ENCODE measurements at regions of chr1 and their contacts with region 1.

Region 1: DNA sequence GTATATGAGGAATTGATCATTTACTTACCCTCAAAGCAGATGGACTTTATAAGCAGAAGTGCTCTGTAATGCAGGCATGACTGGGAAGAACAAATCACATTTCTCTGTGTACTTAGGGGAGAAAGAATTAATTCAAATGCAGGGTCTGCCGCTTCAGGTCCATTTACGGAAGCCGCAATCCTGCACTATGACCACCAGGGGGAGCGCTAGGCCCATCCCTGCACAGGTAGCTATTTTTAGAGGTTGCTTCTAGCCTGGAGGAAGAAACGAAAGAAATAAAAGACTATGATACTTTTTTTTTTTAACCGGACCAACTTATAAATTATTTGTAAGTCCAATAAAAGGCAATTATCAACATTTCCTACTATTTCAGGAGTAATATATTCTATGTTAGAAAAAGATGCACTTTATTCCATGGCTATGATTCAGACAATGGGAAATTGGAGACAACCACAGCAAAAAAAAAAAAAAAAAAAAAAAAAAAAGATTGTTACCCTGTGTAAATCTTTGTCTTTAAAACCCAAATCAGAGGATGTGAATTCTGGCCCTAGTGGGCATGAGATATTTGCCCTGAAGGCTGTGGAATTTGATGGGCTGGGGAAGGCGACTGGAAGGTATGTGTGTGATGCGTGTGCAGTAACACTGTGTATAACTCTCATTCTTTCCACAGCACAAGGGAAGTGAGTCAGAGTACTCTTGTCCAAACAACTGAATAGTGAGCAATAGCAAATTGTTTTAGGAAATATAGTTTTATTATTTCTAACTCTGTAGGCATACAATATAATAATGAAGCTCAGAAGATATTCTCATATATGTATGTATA is 12.9 kb upstream of the FYB2 start:
- DNase-seq: peak; percentile 81
- H3K4me3 ChIP-seq: peak overlapping the region in 1 of 3 experiments; percentile 12
- H3K27ac ChIP-seq: peak overlapping the region; percentile 38
- H3K4me1 ChIP-seq: peaks cover 9% of the 10 kb centered on the region
- H3K27me3 ChIP-seq: no peaks in the 10 kb centered on the region
- CTCF ChIP-seq: peak; percentile 89 to 96

Region 2: DNA sequence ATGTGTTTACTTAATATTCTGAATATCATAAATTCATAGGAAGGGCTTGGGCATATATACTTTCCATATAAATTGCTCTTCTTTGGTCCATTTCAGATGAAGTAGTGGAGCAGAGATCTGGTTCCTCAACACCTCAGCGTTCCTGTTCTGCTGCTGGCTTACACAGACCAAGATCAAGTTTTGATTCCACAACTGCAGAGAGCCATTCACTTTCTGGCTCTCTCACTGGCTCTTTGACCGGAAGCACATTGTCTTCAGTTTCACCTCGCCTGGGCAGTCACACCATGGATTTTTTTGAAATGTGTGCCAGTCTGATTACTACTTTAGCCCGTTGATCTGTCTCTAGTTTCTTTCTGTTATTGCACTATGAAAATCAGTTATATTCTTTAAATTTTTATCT is 124.7 kb before region 1 on chr1:
- CTCF ChIA-PET with region 1: no interaction called
- dilution Hi-C with region 1: no loop called
- in situ Hi-C with region 1: no loop called
- intact Hi-C with region 1: no loop called
- DNase-seq: no peak
- H3K4me3 ChIP-seq: no peak overlapping the region
- H3K27ac ChIP-seq: no peak overlapping the region
- H3K4me1 ChIP-seq: peaks cover 3% of the 10 kb centered on the region
- H3K27me3 ChIP-seq: no peaks in the 10 kb centered on the region
- CTCF ChIP-seq: no peak

Region 3: DNA sequence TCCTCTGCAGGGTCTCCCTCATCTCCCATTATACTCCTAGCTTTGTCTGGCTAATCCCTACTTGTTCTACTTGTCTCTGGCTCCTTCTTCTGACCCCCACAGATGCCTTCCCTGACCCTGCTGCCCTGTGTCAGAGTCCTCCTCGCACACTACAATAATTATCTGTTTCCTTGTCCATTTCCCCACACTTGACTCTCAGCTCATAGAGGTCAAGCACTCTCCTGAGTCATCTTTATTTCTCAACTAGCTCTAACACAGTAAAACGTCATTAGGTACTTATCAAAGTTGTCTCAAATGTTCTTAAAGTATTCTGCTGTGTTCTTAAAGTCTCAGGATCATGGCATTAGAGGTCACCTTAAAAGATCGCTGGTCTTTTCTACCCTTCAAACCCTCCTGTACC is 69.6 kb after region 1 on chr1:
- CTCF ChIA-PET with region 1: no interaction called
- dilution Hi-C with region 1: no loop called
- in situ Hi-C with region 1: no loop called
- intact Hi-C with region 1: no loop called
- DNase-seq: no peak
- H3K4me3 ChIP-seq: no peak overlapping the region
- H3K27ac ChIP-seq: no peak overlapping the region
- H3K4me1 ChIP-seq: no peaks in the 10 kb centered on the region
- H3K27me3 ChIP-seq: peaks cover 4% of the 10 kb centered on the region
- CTCF ChIP-seq: no peak

Region 4: DNA sequence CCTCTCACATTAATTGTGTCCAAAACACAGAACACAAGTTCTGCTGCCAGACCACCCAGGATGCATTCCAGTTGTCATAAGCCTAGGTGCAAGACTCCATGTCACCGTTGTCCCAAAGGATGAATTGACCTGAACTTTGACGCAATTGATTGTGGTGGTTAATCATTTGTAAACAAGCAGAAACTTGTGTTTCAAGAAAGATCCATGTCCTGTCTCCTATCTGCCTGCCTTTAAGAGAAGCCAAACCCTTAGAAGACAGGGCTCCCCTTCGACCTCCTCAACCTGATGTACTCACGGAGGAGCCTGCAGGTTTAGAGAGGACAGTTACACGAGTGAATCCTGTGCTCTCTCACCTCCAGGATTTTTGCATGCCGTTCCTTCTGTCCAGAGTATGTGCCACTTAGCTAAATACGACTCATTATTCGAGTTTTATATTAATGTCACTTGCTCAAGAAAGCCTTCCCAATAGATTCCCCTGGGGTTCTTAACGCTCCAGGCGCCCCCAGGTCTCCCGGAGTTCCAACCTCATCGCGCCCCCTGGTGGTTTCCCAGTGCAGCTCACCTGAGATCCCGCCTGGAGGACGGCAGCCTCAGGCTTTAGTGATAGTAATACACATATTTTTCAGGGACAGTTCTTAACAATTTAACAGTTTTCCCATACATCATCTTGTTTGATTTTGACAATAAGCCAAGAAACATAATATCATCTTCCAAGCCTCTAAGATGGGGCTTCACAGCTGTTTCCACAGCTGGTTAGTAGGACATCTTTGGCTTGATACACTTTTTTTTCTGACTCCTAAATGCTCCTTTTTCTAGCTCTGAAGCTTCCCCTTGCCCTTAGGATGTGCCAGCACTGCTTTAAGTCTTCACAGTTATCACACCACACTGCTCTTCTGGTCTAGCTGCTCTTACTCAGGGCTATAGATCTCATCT is 136.1 kb after region 1 on chr1:
- CTCF ChIA-PET with region 1: no interaction called
- dilution Hi-C with region 1: no loop called
- in situ Hi-C with region 1: no loop called
- intact Hi-C with region 1: loop called (anchors 10 kb)
- DNase-seq: no peak
- H3K4me3 ChIP-seq: no peak overlapping the region
- H3K27ac ChIP-seq: no peak overlapping the region
- H3K4me1 ChIP-seq: no peaks in the 10 kb centered on the region
- H3K27me3 ChIP-seq: no peaks in the 10 kb centered on the region
- CTCF ChIP-seq: peak; percentile 26 to 35

Region 5: DNA sequence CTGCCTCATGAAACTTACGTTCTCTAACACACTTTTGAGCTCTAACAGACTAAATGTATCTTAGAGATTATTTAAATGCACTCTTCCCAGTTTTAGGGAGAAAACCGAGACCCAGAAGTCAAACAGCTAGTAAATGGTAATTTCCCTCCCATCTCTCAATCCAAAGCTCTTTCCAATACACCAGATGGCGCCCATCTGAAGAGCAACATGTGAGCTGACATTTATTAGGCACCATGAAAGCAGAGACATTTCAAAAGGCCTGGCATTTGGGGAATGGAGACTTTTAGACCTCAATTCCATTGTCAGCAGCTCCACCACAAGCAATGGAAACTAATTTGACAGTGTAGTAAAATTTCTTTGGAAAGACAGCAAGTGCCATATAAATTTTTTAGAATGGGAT is 400.4 kb after region 1 on chr1:
- CTCF ChIA-PET with region 1: no interaction called
- dilution Hi-C with region 1: no loop called
- in situ Hi-C with region 1: no loop called
- intact Hi-C with region 1: loop called (anchors 5 kb)
- DNase-seq: peak; percentile 12
- H3K4me3 ChIP-seq: no peak overlapping the region
- H3K27ac ChIP-seq: no peak overlapping the region
- H3K4me1 ChIP-seq: no peaks in the 10 kb centered on the region
- H3K27me3 ChIP-seq: no peaks in the 10 kb centered on the region
- CTCF ChIP-seq: peak; percentile 7 to 54

Region 6: GRCh38 chr1:57424231-57425027 is 592.3 kb after region 1 on chr1:
- CTCF ChIA-PET with region 1: no interaction called
- dilution Hi-C with region 1: no loop called
- in situ Hi-C with region 1: no loop called
- intact Hi-C with region 1: loop called (anchors 5 kb)
- DNase-seq: no peak
- H3K4me3 ChIP-seq: peak overlapping the region; percentile 36 to 42 (median 38)
- H3K27ac ChIP-seq: no peak overlapping the region
- H3K4me1 ChIP-seq: peaks cover 15% of the 10 kb centered on the region
- H3K27me3 ChIP-seq: peaks cover 50% of the 10 kb centered on the region
- CTCF ChIP-seq: peak; percentile 53 to 76

Region 7: DNA sequence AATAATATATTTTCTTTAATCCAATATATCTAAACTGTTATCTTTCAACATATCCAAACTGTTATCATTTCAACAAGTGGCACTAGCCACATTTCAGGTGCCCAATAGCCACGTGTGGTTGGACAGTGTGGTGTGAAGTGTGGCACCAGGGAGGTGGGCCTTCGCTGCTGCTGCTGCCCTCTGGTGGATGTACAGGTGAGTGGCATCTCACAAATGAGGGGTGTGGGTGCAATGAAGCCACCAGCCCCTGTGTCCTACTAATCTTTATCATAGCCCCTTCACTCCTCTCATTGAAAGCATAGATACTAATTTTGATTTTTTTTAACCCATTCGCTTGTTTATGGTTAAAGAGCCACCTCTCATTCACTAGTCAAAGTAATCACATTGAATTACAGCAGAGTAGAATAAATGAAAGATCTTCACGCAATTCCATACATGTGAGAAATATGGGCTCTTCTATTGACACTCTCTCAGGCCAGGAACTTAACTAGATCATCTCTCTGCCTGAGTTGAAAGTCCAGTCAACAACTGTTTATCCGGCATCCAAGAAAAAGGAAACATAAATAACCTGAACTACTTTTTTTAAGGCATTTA is 1215.3 kb after region 1 on chr1:
- CTCF ChIA-PET with region 1: no interaction called
- dilution Hi-C with region 1: no loop called
- in situ Hi-C with region 1: loop called in 1 of 2 experiments (anchors 25 kb)
- intact Hi-C with region 1: loop called (anchors 1 kb)
- DNase-seq: no peak
- H3K4me3 ChIP-seq: no peak overlapping the region
- H3K27ac ChIP-seq: no peak overlapping the region
- H3K4me1 ChIP-seq: peaks cover under 1% of the 10 kb centered on the region
- H3K27me3 ChIP-seq: peaks cover 6% of the 10 kb centered on the region
- CTCF ChIP-seq: peak; percentile 79 to 85

Region 8: DNA sequence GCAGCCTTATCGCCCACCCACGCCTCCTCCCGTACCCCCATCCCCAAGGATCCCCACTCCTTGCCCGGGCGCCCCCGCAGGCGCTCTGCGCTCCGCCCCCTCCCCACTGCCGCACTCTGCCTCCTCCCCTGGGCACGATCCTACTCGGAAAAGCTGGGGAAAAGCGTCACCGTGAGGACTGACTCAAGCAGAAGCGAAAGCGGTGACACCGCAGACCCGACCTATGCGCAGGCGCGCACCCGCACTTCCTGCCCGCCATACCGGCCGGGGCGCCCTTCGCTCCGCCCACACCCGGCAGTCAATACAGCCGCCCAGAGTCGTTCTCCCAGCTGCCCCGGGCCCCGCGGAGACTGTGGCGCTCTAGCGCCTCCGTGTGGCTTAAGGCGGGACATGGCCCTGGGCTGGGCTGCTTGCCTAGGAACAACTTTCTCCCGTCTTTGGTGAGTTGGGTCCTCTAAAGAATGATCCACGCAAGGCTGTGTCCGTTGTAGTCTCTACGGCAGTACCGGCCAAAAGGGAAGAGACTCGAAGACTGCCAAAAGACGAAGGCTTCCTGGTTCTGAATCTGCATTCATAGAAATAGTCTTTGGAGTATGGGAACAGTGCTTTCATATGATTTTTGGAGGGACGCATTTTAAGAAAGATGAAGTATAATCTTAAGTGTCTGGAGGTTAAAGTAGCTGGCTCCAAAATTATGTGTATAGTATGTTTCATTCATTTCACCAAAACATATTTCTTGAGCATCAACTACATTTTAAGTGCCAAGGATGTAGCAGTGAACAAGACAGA is 1714.6 kb after region 1 on chr1 and contains the start of gene OMA1:
- CTCF ChIA-PET with region 1: no interaction called
- dilution Hi-C with region 1: no loop called
- in situ Hi-C with region 1: no loop called
- intact Hi-C with region 1: loop called (anchors 1 kb)
- DNase-seq: peak; percentile 92
- H3K4me3 ChIP-seq: peak within 1 kb of the TSS; percentile 74 to 84 (median 75)
- H3K27ac ChIP-seq: peak within 1 kb of the TSS; percentile 92
- H3K4me1 ChIP-seq: peaks cover 7% of the 10 kb centered on the region
- H3K27me3 ChIP-seq: no peaks in the 10 kb centered on the region
- CTCF ChIP-seq: peak; percentile 79 to 98
- total RNA-seq, gene OMA1: 14.8 to 20.3 TPM

Measured in mammary epithelial cell (primary cell).